Activated CD8-positive, alpha-beta T cell treated with anti-CD3 and anti-CD28 coated beads, Interleukin-2, amount 10 ng/mL, durations not matched to agents 7 days and 5 days (primary cell): ENCODE measurements at regions of chr11 and their contacts with region 1.

Region 1: GRCh38 chr11:131674051-131674755 is 303.8 kb downstream of the NTM start:
- DNase-seq: peak; percentile 61
- ATAC-seq: peak; percentile 76
- H3K4me3 Mint-ChIP-seq: no peak overlapping the region
- H3K27ac Mint-ChIP-seq: no peak overlapping the region
- H3K4me1 Mint-ChIP-seq: no peaks in the 10 kb centered on the region
- H3K27me3 Mint-ChIP-seq: no peaks in the 10 kb centered on the region

Region 2: DNA sequence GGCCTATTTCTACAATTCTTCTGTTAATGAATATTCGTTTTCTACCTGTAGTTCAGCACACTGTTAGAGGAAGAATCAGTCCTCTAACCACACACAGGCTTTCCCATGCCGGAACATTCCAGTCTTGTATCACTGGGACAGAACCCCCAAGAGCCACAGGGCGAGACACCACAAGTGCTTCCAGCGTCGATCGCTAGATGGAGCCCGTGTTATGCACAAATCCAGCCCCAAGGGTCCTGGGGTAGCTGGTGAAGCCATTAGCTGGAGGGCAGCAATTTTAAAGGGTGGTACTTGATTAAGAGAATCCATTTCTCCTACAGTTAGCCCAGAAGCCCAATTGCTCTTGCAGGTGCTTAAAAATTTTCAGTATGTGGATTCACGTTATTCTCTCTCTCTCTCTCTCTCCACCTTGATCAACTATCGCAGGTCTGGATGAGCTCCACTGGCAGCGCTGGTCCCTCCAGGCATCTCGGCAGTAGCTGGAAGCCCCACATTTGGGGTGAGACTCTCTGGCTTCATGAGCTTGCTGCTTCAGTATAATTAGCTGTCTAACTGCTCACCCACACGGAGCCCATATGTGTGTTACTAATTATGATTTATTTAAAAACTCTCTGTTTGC is 609.7 kb before region 1 on chr11:
- CTCF ChIA-PET with region 1: interaction called, 16 read pairs
- POLR2A ChIA-PET with region 1: no interaction called
- DNase-seq: peak; percentile 33
- ATAC-seq: no peak
- H3K4me3 Mint-ChIP-seq: no peak overlapping the region
- H3K27ac Mint-ChIP-seq: no peak overlapping the region
- H3K4me1 Mint-ChIP-seq: no peaks in the 10 kb centered on the region
- H3K27me3 Mint-ChIP-seq: no peaks in the 10 kb centered on the region

Region 3: DNA sequence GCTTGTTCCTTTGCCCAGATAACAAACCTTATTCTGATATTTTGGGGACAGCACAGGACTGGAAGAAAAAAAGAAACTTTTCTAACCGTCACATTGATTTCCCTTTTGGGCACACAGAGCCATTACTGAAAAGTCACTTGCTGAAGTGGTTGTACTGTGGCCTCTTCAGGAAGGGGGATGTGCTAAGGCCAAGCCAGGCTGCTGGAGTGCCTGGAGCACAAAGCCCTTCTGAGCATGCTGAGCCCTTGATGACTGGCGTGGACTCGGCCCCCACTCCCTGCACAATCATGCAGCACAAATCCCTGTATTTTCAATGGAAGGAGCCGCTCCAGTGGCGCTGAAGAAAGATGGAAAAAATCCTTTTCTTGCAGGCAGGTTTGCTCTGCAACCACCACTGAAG is 139.6 kb before region 1 on chr11:
- CTCF ChIA-PET with region 1: no interaction called
- POLR2A ChIA-PET with region 1: no interaction called
- DNase-seq: no peak
- ATAC-seq: no peak
- H3K4me3 Mint-ChIP-seq: no peak overlapping the region
- H3K27ac Mint-ChIP-seq: no peak overlapping the region
- H3K4me1 Mint-ChIP-seq: no peaks in the 10 kb centered on the region
- H3K27me3 Mint-ChIP-seq: no peaks in the 10 kb centered on the region

Region 4: DNA sequence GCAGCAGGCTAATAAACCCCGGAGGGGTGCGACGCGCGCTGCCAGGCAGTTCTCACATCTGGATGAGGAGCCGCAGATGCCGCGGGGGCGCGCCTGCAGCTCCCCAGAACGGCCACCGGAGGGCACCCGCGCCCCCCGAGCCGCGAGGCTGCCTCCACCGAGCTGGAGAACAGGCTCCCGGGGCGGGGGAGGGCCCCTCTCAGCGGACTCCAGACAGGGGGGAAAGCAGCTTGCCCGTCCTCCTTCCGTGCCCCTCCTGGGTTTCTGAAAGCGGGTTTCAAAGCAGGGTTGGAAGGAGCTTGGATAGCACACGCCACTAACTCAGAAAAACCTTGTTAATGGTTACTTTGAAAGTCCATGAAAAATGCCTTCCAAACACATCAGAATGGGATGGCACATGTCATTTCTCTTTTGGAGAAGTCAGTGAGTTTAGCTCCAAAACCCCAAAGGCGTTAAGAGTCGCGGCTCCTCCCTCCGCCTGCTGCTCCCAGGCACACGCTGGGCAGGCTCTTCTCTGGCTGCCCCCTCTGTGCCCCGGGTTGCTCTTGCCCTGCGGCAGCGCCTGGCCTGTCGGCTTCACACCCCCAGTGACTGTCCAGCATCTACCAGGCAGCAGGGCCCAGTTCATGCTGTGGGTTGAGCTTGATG is 14.0 kb after region 1 on chr11:
- CTCF ChIA-PET with region 1: interaction called, 14 read pairs
- POLR2A ChIA-PET with region 1: no interaction called
- DNase-seq: peak; percentile 46
- ATAC-seq: peak; percentile 72
- H3K4me3 Mint-ChIP-seq: no peak overlapping the region
- H3K27ac Mint-ChIP-seq: no peak overlapping the region
- H3K4me1 Mint-ChIP-seq: no peaks in the 10 kb centered on the region
- H3K27me3 Mint-ChIP-seq: no peaks in the 10 kb centered on the region

Region 5: DNA sequence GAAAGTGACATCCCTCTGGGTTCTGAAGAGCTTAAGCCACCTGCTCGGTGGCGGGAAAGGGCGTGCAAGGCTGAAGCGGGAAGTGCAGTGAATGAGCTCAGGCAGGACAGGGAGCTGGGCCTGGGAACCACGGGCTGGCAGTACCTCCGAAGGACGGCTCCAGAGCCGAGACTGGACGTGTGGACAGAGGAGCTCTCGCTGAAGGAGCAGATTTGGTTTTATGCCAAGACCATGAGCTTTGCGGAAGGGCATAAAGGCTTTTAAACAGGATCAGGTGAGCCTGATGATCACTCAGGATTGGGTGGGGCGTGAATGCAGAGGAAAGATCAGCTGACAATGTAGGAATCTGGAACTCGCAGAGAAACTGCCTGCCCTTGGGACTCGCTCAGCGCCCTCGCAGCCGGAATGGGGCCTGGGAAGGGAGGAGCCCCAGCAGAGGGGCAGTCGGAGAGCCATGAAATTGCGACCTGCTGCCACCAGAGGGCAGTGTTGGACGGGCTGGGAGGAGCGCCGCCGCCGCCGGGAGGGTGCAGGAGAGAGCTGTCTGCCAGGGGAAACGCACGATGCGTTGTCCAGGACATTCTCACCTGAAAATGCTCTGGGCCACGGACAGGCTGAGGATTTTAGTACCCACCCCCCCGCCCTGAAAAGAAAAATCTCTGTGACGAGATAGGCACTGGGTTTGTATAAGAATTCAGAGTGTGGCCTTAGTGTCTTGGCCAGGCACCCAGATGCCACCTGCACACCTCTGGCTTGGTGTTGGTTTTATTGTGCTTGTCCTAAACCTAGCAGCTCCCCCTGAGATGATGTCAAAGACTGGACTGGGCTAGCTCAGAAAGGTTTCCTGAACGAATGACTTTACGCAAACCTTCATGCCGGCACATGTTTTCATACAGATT is 20.6 kb after region 1 on chr11:
- CTCF ChIA-PET with region 1: interaction called, 19 read pairs
- POLR2A ChIA-PET with region 1: no interaction called
- DNase-seq: peak; percentile 75
- ATAC-seq: peak; percentile 87
- H3K4me3 Mint-ChIP-seq: no peak overlapping the region
- H3K27ac Mint-ChIP-seq: no peak overlapping the region
- H3K4me1 Mint-ChIP-seq: no peaks in the 10 kb centered on the region
- H3K27me3 Mint-ChIP-seq: no peaks in the 10 kb centered on the region

Region 6: DNA sequence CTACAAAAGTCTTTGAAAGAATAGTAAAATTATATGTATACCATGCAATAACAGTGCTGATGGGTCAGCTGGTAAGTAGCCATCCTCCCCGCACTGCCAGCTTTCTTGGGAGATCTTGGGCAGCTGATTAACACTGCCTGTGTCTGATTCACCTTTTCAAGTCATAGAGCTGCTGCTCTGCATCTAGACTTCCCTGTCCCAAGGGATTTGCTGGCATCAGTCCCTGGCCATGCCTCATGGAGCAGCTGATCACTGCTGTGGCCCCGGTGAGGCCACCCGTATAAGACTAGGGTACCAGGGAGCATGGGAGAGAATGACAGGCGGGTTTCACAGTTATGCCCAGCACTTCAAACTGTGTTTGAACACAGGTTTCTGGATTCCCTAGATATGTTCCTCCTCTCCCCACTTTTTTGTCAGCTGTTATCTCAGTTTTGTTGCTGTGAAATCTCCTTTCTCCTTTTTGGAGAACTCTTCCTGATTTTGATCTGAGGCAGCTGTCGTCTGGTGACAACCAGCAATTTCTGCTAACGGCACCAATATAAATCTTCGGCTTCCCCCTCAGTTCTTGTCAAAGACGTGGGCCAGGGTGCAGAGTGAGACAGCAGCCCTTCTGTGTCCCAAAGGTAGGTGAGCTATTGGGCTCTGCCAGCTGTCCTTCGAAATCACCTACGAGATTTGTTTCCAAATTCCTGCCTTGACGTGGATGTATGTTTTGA is 135.2 kb after region 1 on chr11:
- CTCF ChIA-PET with region 1: no interaction called
- POLR2A ChIA-PET with region 1: no interaction called
- DNase-seq: no peak
- ATAC-seq: no peak
- H3K4me3 Mint-ChIP-seq: no peak overlapping the region
- H3K27ac Mint-ChIP-seq: no peak overlapping the region
- H3K4me1 Mint-ChIP-seq: no peaks in the 10 kb centered on the region
- H3K27me3 Mint-ChIP-seq: no peaks in the 10 kb centered on the region